Endothelial cell of umbilical vein (primary cell): ENCODE measurements at regions of chr1 and their contacts with region 1.

Region 1: DNA sequence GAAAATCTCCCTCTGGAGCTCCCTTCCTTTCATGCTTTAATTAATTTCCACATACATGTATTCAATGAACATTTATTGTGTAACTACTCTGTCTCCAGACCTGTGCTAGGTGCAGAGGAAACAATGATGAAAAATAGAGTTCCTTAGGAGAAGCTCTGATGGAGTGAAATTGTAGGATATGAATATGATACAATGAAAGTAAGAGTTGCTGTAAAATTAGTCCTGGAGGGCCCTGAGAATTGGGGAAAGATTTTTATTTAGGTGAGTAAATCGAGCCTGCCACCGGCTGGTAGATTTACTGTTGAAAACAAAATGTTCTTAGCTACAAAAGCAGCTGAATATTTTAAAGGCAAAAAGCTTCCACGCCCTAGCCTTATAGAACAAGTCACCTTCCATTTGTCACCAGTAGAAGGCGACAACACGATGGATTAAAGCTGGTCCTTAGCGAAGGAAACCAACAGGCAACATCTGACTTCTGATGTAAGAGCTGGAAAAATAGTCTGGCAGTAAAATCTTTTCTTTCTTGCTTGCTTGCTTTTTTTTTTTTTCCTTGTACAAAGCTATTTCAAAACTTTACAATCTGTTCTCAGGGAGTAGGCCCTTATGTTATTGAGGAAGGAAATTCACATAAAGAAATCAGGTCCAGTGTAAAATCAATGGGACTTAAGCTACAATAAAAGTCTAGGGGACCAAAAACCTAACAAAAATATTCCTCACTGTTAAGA is 82.0 kb upstream of the ROR1 start:
- DNase-seq: peak; percentile 90
- H3K4me3 ChIP-seq: no peak overlapping the region
- H3K27ac ChIP-seq: no peak overlapping the region
- H3K4me1 ChIP-seq: no peaks in the 10 kb centered on the region
- H3K27me3 ChIP-seq: no peaks in the 10 kb centered on the region
- CTCF ChIP-seq: peak; percentile 71 to 73
- POLR2A ChIP-seq: no peak

Region 2: GRCh38 chr1:63705078-63705477 is 13.2 kb after region 1 on chr1:
- CTCF ChIA-PET with region 1: interaction called, 21 read pairs
- POLR2A ChIA-PET with region 1: no interaction called
- dilution Hi-C with region 1: no loop called
- intact Hi-C with region 1: no loop called
- DNase-seq: no peak
- H3K4me3 ChIP-seq: no peak overlapping the region
- H3K27ac ChIP-seq: no peak overlapping the region
- H3K4me1 ChIP-seq: peaks cover 16% of the 10 kb centered on the region
- H3K27me3 ChIP-seq: peaks cover 0 to 5% of the 10 kb centered on the region in 2 experiments
- CTCF ChIP-seq: no peak
- POLR2A ChIP-seq: no peak

Region 3: GRCh38 chr1:63746129-63746864 is 54.4 kb after region 1 on chr1:
- CTCF ChIA-PET with region 1: interaction called, 21 read pairs
- POLR2A ChIA-PET with region 1: no interaction called
- dilution Hi-C with region 1: no loop called
- intact Hi-C with region 1: loop called (anchors 1 kb)
- DNase-seq: peak; percentile 99
- H3K4me3 ChIP-seq: no peak overlapping the region
- H3K27ac ChIP-seq: peak overlapping the region; percentile 97
- H3K4me1 ChIP-seq: peaks cover 25% of the 10 kb centered on the region
- H3K27me3 ChIP-seq: no peaks in the 10 kb centered on the region
- CTCF ChIP-seq: no peak
- POLR2A ChIP-seq: no peak

Region 4: DNA sequence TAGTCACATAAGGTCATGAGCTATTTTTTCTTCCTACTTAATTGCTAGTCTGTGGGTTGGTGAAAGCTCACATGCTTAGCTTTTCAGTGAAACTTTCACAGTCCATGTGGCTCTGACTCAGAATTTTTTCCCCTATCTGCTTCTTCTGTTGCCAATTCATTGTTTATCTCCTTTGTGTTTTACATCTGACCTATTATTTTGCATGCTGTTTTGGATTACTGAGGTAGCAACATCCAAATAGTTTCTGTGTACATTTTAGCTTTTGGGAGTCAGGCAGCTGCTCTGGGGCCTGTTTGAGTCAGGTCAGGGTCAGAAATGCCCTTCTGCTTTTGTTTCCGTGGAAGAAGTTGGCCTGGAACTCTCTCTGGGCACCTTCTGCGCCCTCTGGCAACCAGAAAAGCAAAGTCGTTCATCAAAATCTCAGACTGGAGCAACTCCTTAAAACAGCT is 122.0 kb after region 1 on chr1:
- CTCF ChIA-PET with region 1: interaction called, 15 read pairs
- POLR2A ChIA-PET with region 1: no interaction called
- dilution Hi-C with region 1: no loop called
- intact Hi-C with region 1: no loop called
- DNase-seq: peak; percentile 53
- H3K4me3 ChIP-seq: no peak overlapping the region
- H3K27ac ChIP-seq: no peak overlapping the region
- H3K4me1 ChIP-seq: no peaks in the 10 kb centered on the region
- H3K27me3 ChIP-seq: no peaks in the 10 kb centered on the region
- CTCF ChIP-seq: no peak
- POLR2A ChIP-seq: no peak

Region 5: GRCh38 chr1:63902844-63903589 is 211.2 kb after region 1 on chr1:
- CTCF ChIA-PET with region 1: interaction called, 13 read pairs
- POLR2A ChIA-PET with region 1: no interaction called
- dilution Hi-C with region 1: no loop called
- intact Hi-C with region 1: no loop called
- DNase-seq: no peak
- H3K4me3 ChIP-seq: no peak overlapping the region
- H3K27ac ChIP-seq: no peak overlapping the region
- H3K4me1 ChIP-seq: peaks cover 4% of the 10 kb centered on the region
- H3K27me3 ChIP-seq: no peaks in the 10 kb centered on the region
- CTCF ChIP-seq: no peak
- POLR2A ChIP-seq: no peak

Region 6: GRCh38 chr1:64136752-64137411 is 445.0 kb after region 1 on chr1:
- CTCF ChIA-PET with region 1: interaction called, 231 read pairs
- POLR2A ChIA-PET with region 1: interaction called, 3 read pairs
- dilution Hi-C with region 1: loop called (anchors 25 kb)
- intact Hi-C with region 1: loop called (anchors 1 kb)
- DNase-seq: peak; percentile 82
- H3K4me3 ChIP-seq: no peak overlapping the region
- H3K27ac ChIP-seq: no peak overlapping the region
- H3K4me1 ChIP-seq: no peaks in the 10 kb centered on the region
- H3K27me3 ChIP-seq: no peaks in the 10 kb centered on the region
- CTCF ChIP-seq: peak; percentile 89
- POLR2A ChIP-seq: no peak